SK-N-SH (cell line): ENCODE measurements at regions of chr10 and their contacts with region 1.

Region 1: GRCh38 chr10:97686962-97687784 is at the start of gene AVPI1:
- DNase-seq: peak; percentile 98
- H3K4me3 ChIP-seq: peak within 1 kb of the TSS; percentile 76 to 82
- H3K27ac ChIP-seq: peak within 1 kb of the TSS; percentile 65 to 70
- H3K4me1 ChIP-seq: peaks cover 28 to 33% of the 10 kb centered on the region in 2 experiments; a peak in 3 of 4 replicates
- H3K27me3 ChIP-seq: no peaks in the 10 kb centered on the region
- CTCF ChIP-seq: no peak
- EP300 ChIP-seq: peak; percentile 41 to 50; a peak in 2 of 4 replicates
- RAD21 ChIP-seq: no peak
- polyA plus RNA-seq, gene AVPI1: 6.3 and 7.0 TPM in 2 replicates

Region 2: GRCh38 chr10:97701438-97702069 is 14.4 kb after region 1 on chr10:
- CTCF ChIA-PET with region 1: interaction called, 27 read pairs
- POLR2A ChIA-PET with region 1: interaction called, 4 read pairs
- DNase-seq: peak; percentile 78
- H3K4me3 ChIP-seq: no peak overlapping the region; a peak in 1 of 4 replicates
- H3K27ac ChIP-seq: no peak overlapping the region
- H3K4me1 ChIP-seq: no peaks in the 10 kb centered on the region
- H3K27me3 ChIP-seq: no peaks in the 10 kb centered on the region
- CTCF ChIP-seq: peak; percentile 86
- EP300 ChIP-seq: no peak
- RAD21 ChIP-seq: peak; percentile 88

Region 3: GRCh38 chr10:97714048-97714371 is 26.8 kb after region 1 on chr10:
- CTCF ChIA-PET with region 1: interaction called, 45 read pairs
- POLR2A ChIA-PET with region 1: interaction called, 21 read pairs
- DNase-seq: no peak
- H3K4me3 ChIP-seq: peak overlapping the region; percentile 64 to 71
- H3K27ac ChIP-seq: peak overlapping the region; percentile 64 to 84
- H3K4me1 ChIP-seq: peaks cover 19 to 27% of the 10 kb centered on the region in 2 experiments; a peak in 3 of 4 replicates
- H3K27me3 ChIP-seq: no peaks in the 10 kb centered on the region
- CTCF ChIP-seq: peak; percentile 29; the same call in 1 of the 2 replicates
- EP300 ChIP-seq: no peak
- RAD21 ChIP-seq: no peak

Region 4: DNA sequence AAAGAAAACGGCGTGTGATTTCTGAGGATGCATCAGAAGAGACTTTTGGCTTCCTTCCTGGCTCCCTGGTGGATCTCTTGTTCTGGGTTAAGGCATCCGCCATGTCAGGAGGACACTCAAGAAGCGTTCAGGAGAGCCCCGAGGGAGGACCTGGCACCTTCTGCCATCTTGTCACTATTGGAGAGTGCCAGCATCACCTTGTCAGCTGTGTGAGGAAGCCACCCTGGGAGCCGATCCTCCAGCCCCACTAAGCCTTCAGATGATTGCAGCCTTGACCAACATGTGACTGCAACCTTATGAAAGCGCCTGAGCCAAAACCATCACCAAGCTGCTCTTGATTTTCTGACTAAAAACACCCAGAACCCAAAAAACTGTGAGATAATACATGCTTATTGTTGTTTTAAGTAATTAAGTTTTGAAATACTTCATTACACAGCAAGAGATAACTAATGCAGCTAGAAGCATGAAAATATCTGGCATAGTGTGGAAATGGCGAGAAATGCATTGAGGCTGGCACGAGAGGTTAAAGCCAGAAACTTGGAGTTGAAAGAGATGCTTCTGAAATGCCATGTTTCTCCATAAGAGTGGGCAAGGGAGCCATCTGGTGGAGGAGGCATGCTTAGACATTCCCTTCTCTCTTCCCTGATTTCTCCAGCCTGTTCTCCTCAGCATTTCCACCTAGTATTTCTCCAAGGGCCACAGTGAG is 44.3 kb after region 1 on chr10:
- CTCF ChIA-PET with region 1: interaction called, 42 read pairs
- POLR2A ChIA-PET with region 1: interaction called, 5 read pairs
- DNase-seq: peak; percentile 70
- H3K4me3 ChIP-seq: peak overlapping the region in 1 of 2 experiments; percentile 10; a peak in 1 of 4 replicates
- H3K27ac ChIP-seq: no peak overlapping the region
- H3K4me1 ChIP-seq: peaks cover 0 to under 1% of the 10 kb centered on the region in 2 experiments; a peak in 1 of 4 replicates
- H3K27me3 ChIP-seq: no peaks in the 10 kb centered on the region
- CTCF ChIP-seq: peak; percentile 88
- EP300 ChIP-seq: no peak
- RAD21 ChIP-seq: peak; percentile 99

Region 5: GRCh38 chr10:97736902-97737769 is 50.0 kb after region 1 on chr10 and contains the start of gene ZFYVE27:
- CTCF ChIA-PET with region 1: interaction called, 42 read pairs
- POLR2A ChIA-PET with region 1: interaction called, 5 read pairs
- DNase-seq: peak; percentile 99
- H3K4me3 ChIP-seq: peak within 1 kb of the TSS; percentile 89 to 94
- H3K27ac ChIP-seq: peak within 1 kb of the TSS; percentile 74 to 84
- H3K4me1 ChIP-seq: peaks cover 0 to 15% of the 10 kb centered on the region in 2 experiments; a peak in 2 of 4 replicates
- H3K27me3 ChIP-seq: no peaks in the 10 kb centered on the region
- CTCF ChIP-seq: no peak
- EP300 ChIP-seq: 0 out of 4 replicates have a peak, but pooled peaks of 1 of the 2 experiments have one; percentile 30
- RAD21 ChIP-seq: no peak
- polyA plus RNA-seq, gene ZFYVE27: 30.5 and 44.3 TPM in 2 replicates